Common myeloid progenitor, CD34-positive (primary cell): ENCODE measurements at regions of chr6 and their contacts with region 1.

Region 1: GRCh38 chr6:4155848-4156466 is 20.6 kb upstream of the ECI2 start:
- DNase-seq: peak; percentile 83 to 92 (median 88)
- H3K4me3 ChIP-seq: peak overlapping the region in 2 of 7 experiments; percentile 30 to 40
- H3K27ac ChIP-seq: no peak overlapping the region
- H3K4me1 ChIP-seq: peaks cover 0 to 5% (median 3%) of the 10 kb centered on the region in 4 experiments
- H3K27me3 ChIP-seq: no peaks in the 10 kb centered on the region

Region 2: GRCh38 chr6:4135665-4136353 is 20.1 kb before region 1 on chr6:
- CTCF ChIA-PET with region 1: interaction called, 25 read pairs
- POLR2A ChIA-PET with region 1: no interaction called
- DNase-seq: peak; percentile 92 to 97 (median 96)
- H3K4me3 ChIP-seq: peak overlapping the region; percentile 45 to 91 (median 76)
- H3K27ac ChIP-seq: peak overlapping the region in 1 of 2 experiments; percentile 54
- H3K4me1 ChIP-seq: peaks cover 11 to 24% (median 19%) of the 10 kb centered on the region in 4 experiments
- H3K27me3 ChIP-seq: no peaks in the 10 kb centered on the region